ENCODE measurements at regions of chr4 and their contacts with region 1.

Region 1: DNA sequence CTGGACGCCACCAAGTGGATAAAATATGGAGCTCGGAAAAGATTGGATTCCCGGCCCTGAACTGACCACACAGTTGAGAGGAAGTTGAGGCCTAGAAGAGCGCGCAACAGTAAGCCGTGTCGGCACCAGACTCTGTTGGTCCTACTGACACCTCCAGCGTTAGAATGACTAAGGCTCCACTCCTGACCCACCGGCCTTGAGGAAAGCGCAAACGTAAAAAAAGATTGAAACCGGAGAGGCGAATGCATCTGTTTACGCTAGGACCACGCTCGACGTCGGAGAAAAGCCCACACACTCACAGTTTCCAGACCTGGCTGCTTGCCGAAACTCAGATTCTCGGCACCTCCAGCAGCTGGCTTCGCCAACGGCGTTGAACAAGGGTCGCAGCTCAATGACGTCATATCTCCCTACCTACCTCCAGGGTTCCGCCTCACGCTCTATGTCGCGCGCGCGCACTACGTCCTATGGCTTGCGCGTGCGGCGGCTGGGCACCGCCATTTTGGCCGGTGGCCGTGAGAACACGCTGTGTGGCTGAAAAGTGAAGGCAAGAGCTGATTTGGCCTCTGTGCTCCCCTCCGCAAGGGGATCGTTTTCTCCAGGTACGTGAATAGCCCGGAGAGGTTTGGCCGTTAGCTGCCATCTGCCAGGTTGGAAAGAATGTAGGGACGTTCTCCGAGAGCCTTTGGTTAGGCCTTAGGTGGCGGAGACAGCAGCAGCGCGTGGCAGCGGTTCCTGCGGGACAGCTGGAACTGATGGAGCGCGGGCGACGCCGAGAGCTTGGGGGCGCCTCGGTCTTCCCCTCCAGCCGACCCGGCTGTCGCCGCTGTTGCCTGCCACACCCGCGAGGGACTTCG is at the starts of genes ABCE1 and ANAPC10:
- DNase-seq: peak; percentile 97
- H3K4me3 Mint-ChIP-seq: peak within 1 kb of the TSS; percentile 87
- H3K27ac Mint-ChIP-seq: peak within 1 kb of the TSS; percentile 97
- H3K4me1 Mint-ChIP-seq: peaks cover 20% of the 10 kb centered on the region
- H3K27me3 Mint-ChIP-seq: no peaks in the 10 kb centered on the region
- total RNA-seq, gene ABCE1: 138 to 145 TPM
- total RNA-seq, gene ANAPC10: 28.2 to 28.3 TPM

Region 2: DNA sequence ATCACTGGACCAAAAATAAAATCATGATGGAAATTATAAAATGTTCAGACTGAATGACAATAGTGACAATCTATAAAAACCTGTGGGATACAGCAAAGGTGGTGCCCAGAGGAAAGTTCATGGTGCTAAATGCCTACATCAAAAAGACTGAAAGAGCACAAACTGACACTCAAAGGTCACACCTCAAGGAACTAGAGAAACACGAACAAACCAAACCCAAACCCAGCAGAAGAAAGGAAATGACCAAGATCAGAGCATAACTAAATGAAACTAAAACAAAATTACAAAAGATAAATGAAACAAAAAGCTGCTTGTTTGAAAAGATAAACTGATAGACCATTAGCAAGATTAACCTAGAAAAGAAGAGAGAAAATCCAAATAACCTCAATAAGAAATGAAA is 78.7 kb before region 1 on chr4:
- CTCF ChIA-PET with region 1: no interaction called
- POLR2A ChIA-PET with region 1: no interaction called
- intact Hi-C with region 1: loop called (anchors 2 kb)
- DNase-seq: no peak
- H3K4me3 Mint-ChIP-seq: no peak overlapping the region
- H3K27ac Mint-ChIP-seq: peak overlapping the region; percentile 61
- H3K4me1 Mint-ChIP-seq: peaks cover 27% of the 10 kb centered on the region
- H3K27me3 Mint-ChIP-seq: no peaks in the 10 kb centered on the region

Region 3: DNA sequence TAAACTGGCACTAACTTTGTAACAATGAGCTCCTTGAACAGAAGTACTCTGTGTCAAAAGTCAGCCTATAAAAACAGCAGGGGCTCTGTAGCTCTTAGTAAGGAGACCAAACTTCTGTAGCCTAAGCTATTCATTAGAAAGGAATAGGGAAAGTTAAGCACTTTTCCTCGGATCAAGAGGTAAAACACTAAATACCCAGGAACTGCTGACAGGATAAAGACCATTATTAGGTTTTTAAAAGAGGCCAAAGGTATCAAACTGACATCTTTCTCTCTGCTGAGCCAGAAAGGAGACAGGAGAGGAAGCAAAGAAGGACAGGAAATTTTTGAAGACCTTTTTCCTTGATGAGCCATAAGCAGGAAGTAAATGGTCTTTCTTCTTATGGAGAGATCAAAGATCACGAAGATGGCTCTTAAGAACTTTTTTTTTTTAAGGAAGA is 32.0 kb before region 1 on chr4:
- CTCF ChIA-PET with region 1: no interaction called
- POLR2A ChIA-PET with region 1: no interaction called
- intact Hi-C with region 1: no loop called
- DNase-seq: no peak
- H3K4me3 Mint-ChIP-seq: no peak overlapping the region
- H3K27ac Mint-ChIP-seq: no peak overlapping the region
- H3K4me1 Mint-ChIP-seq: peaks cover 7% of the 10 kb centered on the region
- H3K27me3 Mint-ChIP-seq: no peaks in the 10 kb centered on the region

Region 4: GRCh38 chr4:145132511-145133098 is 34.6 kb after region 1 on chr4:
- CTCF ChIA-PET with region 1: no interaction called
- POLR2A ChIA-PET with region 1: interaction called, 6 read pairs
- intact Hi-C with region 1: loop called (anchors 1 kb)
- DNase-seq: peak; percentile 56
- H3K4me3 Mint-ChIP-seq: no peak overlapping the region
- H3K27ac Mint-ChIP-seq: peak overlapping the region; percentile 52
- H3K4me1 Mint-ChIP-seq: peaks cover 59% of the 10 kb centered on the region
- H3K27me3 Mint-ChIP-seq: no peaks in the 10 kb centered on the region

Region 5: GRCh38 chr4:145487631-145488030 is 389.6 kb after region 1 on chr4:
- CTCF ChIA-PET with region 1: no interaction called
- POLR2A ChIA-PET with region 1: no interaction called
- intact Hi-C with region 1: loop called (anchors 1 kb)
- DNase-seq: peak; percentile 44
- H3K4me3 Mint-ChIP-seq: no peak overlapping the region
- H3K27ac Mint-ChIP-seq: no peak overlapping the region
- H3K4me1 Mint-ChIP-seq: peaks cover 8% of the 10 kb centered on the region
- H3K27me3 Mint-ChIP-seq: peaks cover 19% of the 10 kb centered on the region

Region 6: DNA sequence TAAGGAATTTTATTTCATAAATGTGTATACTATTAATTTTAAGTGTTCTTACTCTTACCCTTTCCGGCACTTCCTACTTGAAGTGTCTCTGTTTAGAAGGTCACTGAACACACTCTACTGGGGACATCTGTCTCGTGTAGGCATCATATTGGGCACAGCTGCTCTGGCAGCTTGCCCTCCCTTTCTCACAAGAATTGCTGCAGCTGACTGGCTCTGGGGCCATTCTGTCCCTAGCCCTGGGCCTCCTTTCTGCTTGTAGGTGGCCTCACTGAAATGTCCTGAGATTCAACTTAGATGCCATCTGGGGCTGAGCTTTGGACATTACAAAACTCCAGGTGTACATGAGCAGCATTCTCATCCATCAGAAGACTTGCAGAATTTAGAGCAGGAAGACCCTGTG is 433.2 kb after region 1 on chr4:
- CTCF ChIA-PET with region 1: no interaction called
- POLR2A ChIA-PET with region 1: no interaction called
- intact Hi-C with region 1: no loop called
- DNase-seq: no peak
- H3K4me3 Mint-ChIP-seq: no peak overlapping the region
- H3K27ac Mint-ChIP-seq: no peak overlapping the region
- H3K4me1 Mint-ChIP-seq: no peaks in the 10 kb centered on the region
- H3K27me3 Mint-ChIP-seq: peaks cover 2% of the 10 kb centered on the region

Measured in activated CD4-positive, alpha-beta memory T cell treated with anti-CD3 and anti-CD28 coated beads for 36 hours (primary cell).